Activated CD8-positive, alpha-beta T cell treated with anti-CD3 and anti-CD28 coated beads, Interleukin-2, amount 10 ng/mL, durations not matched to agents 7 days and 5 days (primary cell): ENCODE measurements at regions of chr13 and their contacts with region 1.

Region 1: DNA sequence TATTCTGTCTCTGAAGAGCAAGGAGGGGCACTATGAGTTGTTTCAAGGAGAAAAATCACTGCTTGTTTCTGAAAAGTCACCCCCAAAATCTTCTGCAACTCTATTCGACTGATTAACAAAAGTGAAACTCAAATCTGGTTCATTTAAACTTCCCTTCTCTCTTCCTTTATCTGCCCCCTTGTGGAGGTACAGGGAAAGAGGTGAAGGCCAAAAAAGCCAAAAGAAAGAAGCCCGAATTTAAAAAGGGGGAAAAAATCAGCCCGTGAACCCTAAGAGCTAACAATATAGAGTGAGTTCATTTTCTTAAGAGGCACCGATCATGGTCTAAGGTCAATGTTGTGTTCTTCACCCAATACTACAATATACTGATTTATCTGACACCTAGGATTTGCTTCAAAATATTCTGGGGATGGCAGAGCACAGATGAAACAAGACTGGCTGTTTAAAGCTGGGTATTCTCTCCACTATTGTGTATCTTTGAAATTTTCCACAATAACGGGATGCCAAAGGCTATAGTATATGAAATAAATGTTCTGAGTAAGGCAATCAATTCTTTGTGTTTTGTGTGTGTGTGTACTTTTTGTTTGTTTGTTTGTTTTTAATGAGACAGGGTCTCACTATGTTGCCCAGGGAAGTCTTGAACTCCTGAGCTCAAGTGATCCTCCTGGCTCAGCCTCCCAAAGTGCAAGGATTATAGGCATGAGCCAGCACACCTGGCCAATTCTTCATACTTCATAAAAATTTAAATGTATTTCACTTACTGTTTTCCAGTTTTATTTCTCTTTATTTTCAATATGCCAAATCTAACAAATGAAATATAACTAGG is 55.0 kb upstream of the EEF1AKMT1 start:
- DNase-seq: peak; percentile 62
- ATAC-seq: peak; percentile 84
- H3K4me3 Mint-ChIP-seq: peak overlapping the region; percentile 44
- H3K27ac Mint-ChIP-seq: peak overlapping the region; percentile 54
- H3K4me1 Mint-ChIP-seq: peaks cover 9% of the 10 kb centered on the region
- H3K27me3 Mint-ChIP-seq: no peaks in the 10 kb centered on the region

Region 2: GRCh38 chr13:20590561-20590960 is 238.2 kb before region 1 on chr13:
- CTCF ChIA-PET with region 1: no interaction called
- POLR2A ChIA-PET with region 1: no interaction called
- DNase-seq: no peak
- ATAC-seq: no peak
- H3K4me3 Mint-ChIP-seq: no peak overlapping the region
- H3K27ac Mint-ChIP-seq: no peak overlapping the region
- H3K4me1 Mint-ChIP-seq: no peaks in the 10 kb centered on the region
- H3K27me3 Mint-ChIP-seq: no peaks in the 10 kb centered on the region

Region 3: DNA sequence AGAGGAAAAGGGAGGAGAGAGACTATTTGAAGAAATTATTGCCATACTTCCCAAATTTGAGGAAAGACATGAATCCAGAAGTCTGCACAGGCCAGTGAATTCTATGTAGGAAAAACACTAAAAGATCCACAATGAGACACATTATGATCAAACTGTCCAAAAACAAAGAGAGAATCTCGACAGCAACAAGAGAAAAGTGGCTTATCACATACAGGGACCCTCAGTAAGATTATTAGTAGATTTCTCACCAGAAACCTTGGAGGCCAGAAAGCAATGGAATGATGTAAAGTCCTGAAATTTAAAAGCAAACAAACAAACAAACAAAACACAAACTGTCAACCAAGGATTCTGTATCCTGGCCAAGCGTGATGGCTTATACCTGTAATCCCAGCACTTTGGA is 181.0 kb before region 1 on chr13:
- CTCF ChIA-PET with region 1: no interaction called
- POLR2A ChIA-PET with region 1: no interaction called
- DNase-seq: no peak
- ATAC-seq: no peak
- H3K4me3 Mint-ChIP-seq: no peak overlapping the region
- H3K27ac Mint-ChIP-seq: no peak overlapping the region
- H3K4me1 Mint-ChIP-seq: no peaks in the 10 kb centered on the region
- H3K27me3 Mint-ChIP-seq: no peaks in the 10 kb centered on the region

Region 4: GRCh38 chr13:20703780-20704445 is 124.8 kb before region 1 on chr13:
- CTCF ChIA-PET with region 1: interaction called, 11 read pairs
- POLR2A ChIA-PET with region 1: no interaction called
- DNase-seq: peak; percentile 81
- ATAC-seq: peak; percentile 90
- H3K4me3 Mint-ChIP-seq: no peak overlapping the region
- H3K27ac Mint-ChIP-seq: no peak overlapping the region
- H3K4me1 Mint-ChIP-seq: peaks cover 15% of the 10 kb centered on the region
- H3K27me3 Mint-ChIP-seq: peaks cover 22% of the 10 kb centered on the region

Region 5: DNA sequence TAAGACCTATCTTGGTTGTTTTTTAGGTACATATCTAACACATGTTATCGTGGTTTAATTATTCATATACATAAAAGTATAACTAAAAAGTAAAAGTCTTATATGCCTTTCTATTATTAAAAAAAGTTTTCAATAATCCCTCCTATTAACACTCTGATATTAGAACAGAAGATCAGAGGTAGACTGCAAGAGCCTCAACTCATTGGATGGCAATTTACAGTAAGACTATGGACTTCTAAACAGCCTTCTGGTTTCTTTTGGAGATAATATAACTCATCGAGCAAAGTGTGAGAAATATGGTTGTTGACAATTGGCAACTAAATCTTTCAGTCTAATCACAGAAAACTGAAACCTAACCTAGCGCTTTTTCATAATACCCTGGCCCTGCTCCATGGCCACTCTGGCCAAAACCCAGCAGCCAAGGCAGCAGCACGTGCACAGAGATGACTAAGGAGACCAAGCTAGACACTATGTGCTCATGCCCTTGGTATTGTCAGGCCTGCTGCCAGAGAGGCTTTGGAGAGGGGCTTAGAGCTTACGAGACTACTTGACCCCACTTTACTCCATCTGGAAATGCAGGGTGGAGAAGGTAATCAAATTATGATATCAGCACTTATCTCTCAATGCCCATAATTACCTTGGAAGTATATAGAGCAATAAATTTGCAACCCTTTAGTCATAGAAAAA is 14.4 kb before region 1 on chr13:
- CTCF ChIA-PET with region 1: interaction called, 34 read pairs
- POLR2A ChIA-PET with region 1: interaction called, 3 read pairs
- DNase-seq: no peak
- ATAC-seq: no peak
- H3K4me3 Mint-ChIP-seq: no peak overlapping the region
- H3K27ac Mint-ChIP-seq: no peak overlapping the region
- H3K4me1 Mint-ChIP-seq: no peaks in the 10 kb centered on the region
- H3K27me3 Mint-ChIP-seq: no peaks in the 10 kb centered on the region

Region 6: GRCh38 chr13:20847296-20847695 is 18.5 kb after region 1 on chr13:
- CTCF ChIA-PET with region 1: interaction called, 26 read pairs
- POLR2A ChIA-PET with region 1: interaction called, 3 read pairs
- DNase-seq: no peak
- ATAC-seq: no peak
- H3K4me3 Mint-ChIP-seq: no peak overlapping the region
- H3K27ac Mint-ChIP-seq: no peak overlapping the region
- H3K4me1 Mint-ChIP-seq: no peaks in the 10 kb centered on the region
- H3K27me3 Mint-ChIP-seq: no peaks in the 10 kb centered on the region

Region 7: GRCh38 chr13:20924758-20925394 is 96.1 kb after region 1 on chr13:
- CTCF ChIA-PET with region 1: interaction called, 14 read pairs
- POLR2A ChIA-PET with region 1: no interaction called
- DNase-seq: peak; percentile 85
- ATAC-seq: peak; percentile 77
- H3K4me3 Mint-ChIP-seq: no peak overlapping the region
- H3K27ac Mint-ChIP-seq: no peak overlapping the region
- H3K4me1 Mint-ChIP-seq: no peaks in the 10 kb centered on the region
- H3K27me3 Mint-ChIP-seq: peaks cover 3% of the 10 kb centered on the region